SK-N-SH (cell line): ENCODE measurements at regions of chr19 and their contacts with region 1.

Region 1: DNA sequence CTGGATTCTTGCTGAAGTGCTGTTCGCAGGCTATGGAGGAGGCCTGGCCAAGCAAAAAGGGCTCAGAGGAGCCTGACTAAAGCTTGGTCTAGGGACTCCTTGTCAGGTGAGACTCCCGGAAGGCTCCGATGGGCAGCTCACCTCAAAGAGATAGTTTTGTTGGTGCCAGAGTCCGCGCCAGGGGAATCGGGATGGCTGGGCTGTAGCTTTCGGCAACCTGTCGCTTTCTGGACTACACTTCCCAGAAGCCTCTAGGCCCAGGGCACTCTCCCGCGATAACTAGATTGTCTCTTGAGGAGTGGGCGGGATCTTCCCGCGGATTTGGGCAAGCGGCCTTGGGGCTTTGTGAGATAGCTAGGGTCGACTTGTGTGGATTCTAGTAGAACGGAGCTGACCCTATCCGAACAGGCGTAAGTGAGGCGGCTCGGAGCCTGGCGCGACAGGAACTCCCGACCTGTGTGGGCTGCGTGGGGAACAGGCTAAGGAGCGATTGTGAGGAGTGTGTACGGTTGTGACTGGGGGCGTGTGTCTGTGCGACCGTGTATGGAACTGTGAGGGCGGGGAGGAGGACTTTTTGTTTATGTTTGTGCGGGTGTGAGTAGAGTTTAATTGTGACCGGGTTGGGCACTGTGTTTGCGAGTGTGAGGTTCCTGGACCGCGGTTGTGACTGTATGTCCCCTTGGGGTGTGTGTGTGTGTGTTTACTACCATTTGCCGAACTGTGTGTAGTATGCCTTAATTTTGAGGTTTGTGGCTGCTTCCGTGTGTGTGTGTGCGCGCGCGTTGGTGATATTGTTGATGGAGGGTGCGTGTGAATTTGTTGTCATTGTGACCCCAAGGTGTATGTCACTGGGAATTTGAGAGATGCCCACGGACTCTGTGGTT is at the start of gene ZNF345:
- DNase-seq: peak; percentile 84
- H3K4me3 ChIP-seq: peak within 1 kb of the TSS; percentile 80 to 92
- H3K27ac ChIP-seq: peak within 1 kb of the TSS; percentile 62 to 81
- H3K4me1 ChIP-seq: peaks cover 0 to 5% of the 10 kb centered on the region in 2 experiments; a peak in 1 of 4 replicates
- H3K27me3 ChIP-seq: no peaks in the 10 kb centered on the region
- CTCF ChIP-seq: no peak
- EP300 ChIP-seq: no peak
- RAD21 ChIP-seq: no peak
- polyA plus RNA-seq, gene ZNF345: 2.4 and 4.2 TPM in 2 replicates

Region 2: DNA sequence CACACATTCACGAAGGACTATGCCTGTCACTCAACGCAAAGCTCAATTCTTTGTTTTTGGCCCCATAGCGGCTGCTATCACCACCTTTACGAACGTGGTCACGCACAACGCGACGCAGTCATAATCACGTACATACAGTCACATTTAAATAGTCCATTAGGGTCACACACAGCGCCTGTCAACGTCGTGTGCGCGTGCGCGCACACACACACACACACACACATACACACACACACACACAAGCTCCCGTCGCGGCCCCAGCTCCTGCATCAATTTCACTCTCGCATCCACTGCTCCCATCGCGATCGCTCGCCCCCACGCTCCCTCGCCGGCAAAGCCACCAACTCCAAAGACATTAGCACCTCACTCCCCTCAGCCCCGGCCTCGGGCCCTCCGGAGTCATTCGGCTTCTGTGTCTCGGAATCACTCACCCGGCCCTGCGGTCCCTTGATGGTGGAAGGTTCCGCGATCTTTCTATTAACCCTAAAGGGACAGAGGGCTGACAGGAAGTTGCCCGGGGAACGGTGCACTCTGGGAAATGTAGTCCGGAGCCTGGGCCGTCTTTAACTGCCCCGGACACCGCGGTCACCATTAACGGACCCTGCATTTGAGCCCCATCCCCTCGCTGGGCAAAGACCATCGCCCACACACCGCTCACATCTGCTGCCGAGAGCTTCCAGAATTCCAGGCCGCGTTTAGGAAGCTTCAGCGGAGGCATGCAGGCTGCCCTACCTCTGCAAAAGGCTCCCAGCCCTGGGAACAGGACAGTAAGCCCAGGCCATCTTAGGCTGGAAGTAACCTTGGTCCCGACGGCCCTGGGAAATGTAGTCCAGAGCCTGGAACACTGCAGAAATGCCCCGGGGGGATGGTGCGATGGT is 12.7 kb before region 1 on chr19 and contains the start of gene ZNF790:
- CTCF ChIA-PET with region 1: interaction called, 5 read pairs
- POLR2A ChIA-PET with region 1: interaction called, 67 read pairs
- DNase-seq: peak; percentile 86
- H3K4me3 ChIP-seq: peak within 1 kb of the TSS; percentile 57 to 76
- H3K27ac ChIP-seq: peak within 1 kb of the TSS; percentile 71 to 98
- H3K4me1 ChIP-seq: peaks cover 0 to 5% of the 10 kb centered on the region in 2 experiments; a peak in 1 of 4 replicates
- H3K27me3 ChIP-seq: no peaks in the 10 kb centered on the region
- CTCF ChIP-seq: no peak
- EP300 ChIP-seq: peak in 1 of 2 experiments; percentile 28; a peak in 1 of 4 replicates
- RAD21 ChIP-seq: no peak
- polyA plus RNA-seq, gene ZNF790: 2.2 and 3.1 TPM in 2 replicates